HEK293 (cell line): ENCODE measurements at regions of chr9 and their contacts with region 1.

Region 1: DNA sequence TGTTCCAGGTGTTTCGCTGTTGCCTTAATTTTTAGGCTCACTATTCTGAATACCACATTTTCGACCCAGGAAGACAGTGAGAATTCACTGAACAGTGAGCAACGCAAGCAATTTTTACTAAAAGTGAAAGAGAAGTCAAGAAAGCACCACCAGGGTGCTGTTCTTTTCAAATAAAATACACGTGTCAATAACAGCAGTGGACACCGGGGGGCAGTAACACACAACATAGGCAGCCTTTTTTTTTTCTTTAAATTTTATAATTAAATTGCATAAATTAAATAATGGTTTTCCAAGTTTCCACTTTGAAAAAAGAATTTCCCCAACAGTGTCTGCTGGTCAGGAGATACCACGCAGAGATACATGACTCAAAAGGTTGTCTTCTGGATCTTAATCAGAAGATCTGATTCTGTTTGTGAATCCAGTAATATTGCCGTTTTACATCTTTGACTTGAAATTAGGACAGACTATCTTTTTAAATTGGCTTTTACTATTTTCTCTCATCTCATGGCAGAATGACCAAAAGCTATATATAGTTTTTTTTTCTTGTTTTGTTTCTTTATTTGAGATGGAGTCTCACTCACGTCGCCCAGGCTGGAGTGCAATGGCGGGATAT is 47.1 kb upstream of the SH3GL2 start:
- H3K4me3 ChIP-seq: no peak overlapping the region
- H3K27ac ChIP-seq: no peak overlapping the region
- H3K4me1 ChIP-seq: no peaks in the 10 kb centered on the region
- CTCF ChIP-seq: peak; percentile 42; the same call in 1 of the 2 replicates

Region 2: DNA sequence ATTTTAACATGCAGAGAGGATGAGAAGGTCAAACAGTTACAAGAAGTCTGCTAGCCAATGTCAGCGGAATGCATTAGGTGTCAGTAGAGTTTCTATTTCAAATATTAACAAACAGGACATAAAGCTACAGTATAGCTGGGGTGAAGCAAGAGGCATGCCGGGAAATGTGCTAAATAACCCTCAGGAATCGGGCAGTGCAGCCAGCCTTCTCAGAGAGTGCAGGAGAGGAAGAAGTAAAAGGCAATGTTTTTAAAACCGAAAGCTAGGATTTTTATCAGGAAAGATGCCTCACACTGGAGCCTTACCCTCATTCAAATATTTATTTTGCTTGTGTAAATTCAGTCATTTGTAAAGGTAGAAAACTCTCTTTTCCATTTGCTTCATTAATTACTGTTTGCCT is 12.0 kb before region 1 on chr9:
- CTCF ChIA-PET with region 1: interaction called, 10 read pairs
- POLR2A ChIA-PET with region 1: no interaction called
- H3K4me3 ChIP-seq: no peak overlapping the region
- H3K27ac ChIP-seq: no peak overlapping the region
- H3K4me1 ChIP-seq: no peaks in the 10 kb centered on the region
- CTCF ChIP-seq: no peak

Region 3: DNA sequence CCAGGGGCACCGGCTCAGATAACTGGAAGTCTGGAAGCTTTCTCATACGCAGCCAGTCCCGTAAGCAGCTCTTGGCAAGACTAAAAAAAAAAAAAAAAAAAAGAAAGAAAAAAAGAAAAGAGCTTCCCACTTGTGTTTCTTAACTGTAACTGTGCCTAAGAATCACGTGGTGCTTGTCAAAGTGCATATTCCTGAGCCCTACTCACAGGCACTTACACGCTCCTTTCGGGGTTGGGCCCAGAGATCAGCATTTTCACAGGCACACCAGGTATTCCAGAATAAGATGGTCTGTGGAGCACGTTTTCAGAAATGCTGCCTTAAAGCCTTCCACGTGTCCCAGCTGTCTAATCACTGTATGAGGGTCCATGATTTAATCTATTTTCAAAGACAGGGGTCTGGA is 24.5 kb after region 1 on chr9:
- CTCF ChIA-PET with region 1: no interaction called
- POLR2A ChIA-PET with region 1: no interaction called
- H3K4me3 ChIP-seq: no peak overlapping the region
- H3K27ac ChIP-seq: no peak overlapping the region
- H3K4me1 ChIP-seq: no peaks in the 10 kb centered on the region
- CTCF ChIP-seq: no peak

Region 4: GRCh38 chr9:17688834-17689233 is 157.1 kb after region 1 on chr9:
- CTCF ChIA-PET with region 1: no interaction called
- POLR2A ChIA-PET with region 1: no interaction called
- H3K4me3 ChIP-seq: no peak overlapping the region
- H3K27ac ChIP-seq: no peak overlapping the region
- H3K4me1 ChIP-seq: no peaks in the 10 kb centered on the region
- CTCF ChIP-seq: no peak

Region 5: DNA sequence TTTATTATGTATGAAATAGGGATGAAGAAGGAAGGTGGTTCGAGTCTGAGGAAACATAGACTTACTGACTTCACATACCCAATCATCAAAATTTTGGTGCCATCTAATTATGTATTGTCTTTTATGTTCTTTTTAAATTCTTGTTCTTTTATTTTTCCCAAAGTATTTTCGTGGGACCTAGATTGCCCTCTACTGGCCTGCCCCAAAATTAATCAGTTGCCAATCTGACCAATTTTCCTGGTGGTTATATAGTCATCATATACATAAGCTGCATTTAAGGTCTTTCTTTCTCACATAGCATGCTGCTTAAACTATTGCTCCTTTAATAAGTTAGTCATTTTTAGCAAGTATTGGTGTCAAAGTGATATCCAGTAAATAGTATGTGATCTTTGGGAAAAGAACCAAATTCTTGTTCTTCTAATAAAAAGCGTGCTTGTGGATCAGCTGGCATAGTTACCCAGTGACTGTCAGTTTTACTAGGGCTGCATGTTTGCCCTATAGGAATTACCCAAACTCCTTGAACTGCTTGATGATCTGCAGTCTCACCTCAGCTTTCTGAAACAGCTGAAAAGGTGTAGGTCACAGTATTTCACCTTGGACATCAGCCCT is 270.6 kb after region 1 on chr9:
- CTCF ChIA-PET with region 1: interaction called, 99 read pairs
- POLR2A ChIA-PET with region 1: no interaction called
- H3K4me3 ChIP-seq: no peak overlapping the region
- H3K27ac ChIP-seq: no peak overlapping the region
- H3K4me1 ChIP-seq: no peaks in the 10 kb centered on the region
- CTCF ChIP-seq: no peak

Region 6: DNA sequence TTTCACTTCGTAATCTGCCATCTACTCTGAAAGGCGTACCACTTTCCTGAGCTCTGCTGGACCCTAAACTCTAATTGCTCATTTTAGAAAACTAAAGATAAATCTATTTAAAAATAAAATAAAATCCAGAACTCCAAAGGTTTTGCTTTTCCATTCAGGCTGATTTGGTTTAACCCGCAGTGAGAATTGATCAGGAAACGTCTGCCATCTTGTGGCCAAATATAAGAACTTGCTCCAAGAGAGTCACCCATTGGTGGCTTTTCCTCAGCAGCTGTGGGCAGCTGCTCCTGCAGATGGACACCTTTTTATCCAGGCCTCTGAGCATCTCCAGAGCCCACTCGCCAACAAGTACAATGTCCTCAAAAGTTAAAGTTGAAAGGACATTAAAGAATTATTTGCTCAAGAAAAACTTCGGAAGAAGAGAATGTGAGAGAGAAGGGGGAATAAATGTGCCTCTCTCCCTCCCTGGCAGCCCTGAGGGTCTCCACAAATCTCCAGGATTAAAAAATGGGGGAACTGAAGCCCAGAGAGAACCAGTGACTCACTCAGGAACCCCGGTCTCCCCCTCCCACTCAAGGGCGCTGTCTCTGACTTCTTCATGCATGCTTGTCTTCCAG is 1497.2 kb after region 1 on chr9:
- CTCF ChIA-PET with region 1: interaction called, 10 read pairs
- POLR2A ChIA-PET with region 1: no interaction called
- H3K4me3 ChIP-seq: no peak overlapping the region
- H3K27ac ChIP-seq: no peak overlapping the region
- H3K4me1 ChIP-seq: no peaks in the 10 kb centered on the region
- CTCF ChIP-seq: no peak